AG04449 (cell line): ENCODE measurements at regions of chr3 and their contacts with region 1.

Region 1: GRCh38 chr3:124351430-124352148 is 359.7 kb upstream of the ROPN1 start:
- DNase-seq: peak; percentile 47
- H3K4me3 ChIP-seq: no peak overlapping the region
- CTCF ChIP-seq: peak; percentile 56

Region 2: DNA sequence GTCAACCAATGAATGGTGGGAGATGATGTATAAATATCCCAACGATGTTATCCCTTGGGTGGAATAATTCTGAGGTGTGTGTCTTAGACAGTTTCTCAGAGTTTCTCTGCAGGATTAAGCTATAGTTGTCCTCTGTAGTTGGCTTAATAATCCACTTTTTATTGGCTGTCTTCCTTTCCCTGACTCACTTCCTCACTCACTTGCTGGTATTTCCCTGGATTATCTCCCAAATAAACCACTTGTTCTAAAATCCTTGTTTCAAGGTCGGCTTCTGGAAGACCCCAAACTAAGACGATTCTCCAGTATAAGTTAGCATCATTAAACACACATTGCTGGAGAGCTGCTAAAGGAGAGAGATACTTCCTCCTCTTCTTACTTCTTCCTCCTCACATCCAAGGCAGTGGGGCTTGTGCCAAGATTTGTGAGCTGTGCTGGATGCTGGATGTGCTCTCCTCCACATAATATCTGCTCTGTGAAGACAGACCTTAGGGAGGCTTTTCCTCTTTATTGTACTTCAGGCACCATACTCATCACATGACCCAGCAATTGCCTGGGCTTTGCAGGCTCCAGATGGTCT is 337.1 kb before region 1 on chr3:
- CTCF ChIA-PET with region 1: interaction called, 30 read pairs
- POLR2A ChIA-PET with region 1: no interaction called
- DNase-seq: no peak
- H3K4me3 ChIP-seq: no peak overlapping the region
- CTCF ChIP-seq: no peak

Region 3: DNA sequence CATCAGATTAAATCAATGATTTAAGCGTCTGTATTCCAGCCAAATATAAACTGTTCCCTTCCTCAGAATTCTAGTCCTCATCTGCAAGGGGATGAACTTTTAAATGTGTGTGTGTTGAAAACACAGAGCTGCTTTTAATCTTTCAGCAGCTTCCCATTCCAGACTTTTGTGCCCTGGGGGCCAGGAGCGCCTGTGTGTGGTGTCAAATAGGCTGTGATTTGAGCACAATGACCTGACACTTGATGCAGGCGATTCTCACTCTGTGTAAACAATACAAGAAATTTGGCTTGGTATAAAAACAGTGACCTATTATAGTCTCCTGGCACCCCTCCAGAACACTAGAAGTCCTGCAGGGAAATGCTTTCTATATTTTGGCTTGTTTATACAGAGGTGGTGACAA is 85.1 kb before region 1 on chr3:
- CTCF ChIA-PET with region 1: no interaction called
- POLR2A ChIA-PET with region 1: no interaction called
- DNase-seq: no peak
- H3K4me3 ChIP-seq: no peak overlapping the region
- CTCF ChIP-seq: no peak

Region 4: GRCh38 chr3:124333931-124334640 is 17.5 kb before region 1 on chr3:
- CTCF ChIA-PET with region 1: interaction called, 10 read pairs
- POLR2A ChIA-PET with region 1: no interaction called
- DNase-seq: no peak
- H3K4me3 ChIP-seq: no peak overlapping the region
- CTCF ChIP-seq: no peak

Region 5: DNA sequence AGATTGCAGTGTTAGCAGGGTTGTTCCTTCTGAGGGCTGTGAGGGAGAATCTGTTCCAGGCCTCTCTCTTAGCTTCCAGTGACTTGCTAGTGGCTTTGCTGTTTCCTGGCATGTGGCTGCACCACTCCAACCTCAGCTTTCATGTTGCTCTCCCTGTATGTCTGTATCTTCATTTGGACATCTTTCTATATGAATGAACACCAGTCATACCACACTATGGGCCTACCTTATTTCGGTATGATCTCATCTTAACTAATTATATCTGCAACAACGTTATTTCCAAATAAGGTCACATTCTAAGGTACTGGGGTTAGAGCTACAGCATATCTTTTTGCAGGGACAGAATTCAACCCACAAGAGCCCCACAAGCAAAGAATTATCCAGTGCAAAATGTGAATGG is 21.9 kb after region 1 on chr3:
- CTCF ChIA-PET with region 1: interaction called, 11 read pairs
- POLR2A ChIA-PET with region 1: no interaction called
- DNase-seq: no peak
- H3K4me3 ChIP-seq: no peak overlapping the region
- CTCF ChIP-seq: no peak

Region 6: GRCh38 chr3:124451630-124452317 is 100.2 kb after region 1 on chr3:
- CTCF ChIA-PET with region 1: interaction called, 12 read pairs
- POLR2A ChIA-PET with region 1: no interaction called
- DNase-seq: no peak
- H3K4me3 ChIP-seq: no peak overlapping the region
- CTCF ChIP-seq: no peak

Region 7: GRCh38 chr3:124552239-124552638 is 200.7 kb after region 1 on chr3:
- CTCF ChIA-PET with region 1: interaction called, 121 read pairs
- POLR2A ChIA-PET with region 1: no interaction called
- DNase-seq: no peak
- H3K4me3 ChIP-seq: no peak overlapping the region
- CTCF ChIP-seq: no peak